Activated CD4-positive, alpha-beta memory T cell treated with anti-CD3 and anti-CD28 coated beads, Interleukin-2, amount 10 ng/mL, durations not matched to agents 7 days and 5 days (primary cell): ENCODE measurements at regions of chr1 and their contacts with region 1.

Region 1: GRCh38 chr1:26391450-26391849 is 18.9 kb upstream of the ZNF683 start:
- DNase-seq: peak; percentile 74
- H3K4me3 Mint-ChIP-seq: no peak overlapping the region
- H3K27ac Mint-ChIP-seq: no peak overlapping the region
- H3K4me1 Mint-ChIP-seq: peaks cover 43% of the 10 kb centered on the region
- H3K27me3 Mint-ChIP-seq: peaks cover 7% of the 10 kb centered on the region

Region 2: GRCh38 chr1:26306290-26307229 is 84.9 kb before region 1 on chr1 and contains the start of gene UBXN11:
- CTCF ChIA-PET with region 1: interaction called, 14 read pairs
- POLR2A ChIA-PET with region 1: no interaction called
- DNase-seq: peak; percentile 96
- H3K4me3 Mint-ChIP-seq: peak within 1 kb of the TSS; percentile 90
- H3K27ac Mint-ChIP-seq: peak within 1 kb of the TSS; percentile 98
- H3K4me1 Mint-ChIP-seq: peaks cover 43% of the 10 kb centered on the region
- H3K27me3 Mint-ChIP-seq: no peaks in the 10 kb centered on the region
- total RNA-seq, gene UBXN11: 46.9 to 49.9 TPM

Region 3: DNA sequence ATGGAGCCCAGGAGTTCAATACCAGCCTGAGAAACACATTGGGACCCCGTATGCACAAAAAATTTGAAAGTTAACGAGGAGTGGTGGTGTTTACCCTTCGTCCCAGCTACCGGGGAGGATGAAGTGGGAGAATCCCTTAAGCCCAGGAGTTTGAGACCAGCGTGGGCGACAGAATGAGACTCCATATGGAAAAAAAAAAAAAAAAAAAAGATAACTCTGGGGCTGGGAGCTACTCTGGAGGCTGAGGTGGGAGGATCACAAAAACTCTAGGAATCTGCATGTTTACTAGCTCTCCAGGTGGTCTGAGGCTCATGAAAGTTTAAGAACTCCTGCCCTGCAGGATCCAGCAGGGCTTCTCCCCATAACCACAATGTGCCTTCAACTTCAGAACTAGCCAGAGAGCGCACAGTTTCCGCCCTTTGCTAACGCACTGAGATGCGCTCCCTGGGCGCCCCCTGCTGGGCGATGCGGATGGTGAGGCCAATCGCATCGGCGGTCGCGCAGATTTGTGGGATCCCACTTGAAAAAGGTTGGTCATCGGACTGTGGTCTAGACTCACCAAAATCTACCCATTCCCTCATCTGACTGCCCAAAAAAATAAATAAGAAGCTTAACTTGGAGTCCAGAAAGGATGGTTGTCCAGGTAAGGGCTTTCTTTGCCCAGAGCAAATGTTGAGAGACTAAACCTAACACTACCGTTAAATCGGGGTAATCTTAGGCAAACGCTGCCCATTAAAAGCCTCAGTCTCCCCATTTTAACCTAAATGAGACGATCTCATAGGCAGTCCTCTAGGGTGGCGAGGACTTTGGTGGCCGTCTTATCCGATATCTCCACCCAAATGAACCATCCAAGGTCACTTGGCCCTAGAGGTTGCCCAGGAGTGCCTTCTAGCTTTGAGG is 27.7 kb before region 1 on chr1:
- CTCF ChIA-PET with region 1: interaction called, 30 read pairs
- POLR2A ChIA-PET with region 1: interaction called, 4 read pairs
- DNase-seq: peak; percentile 88
- H3K4me3 Mint-ChIP-seq: no peak overlapping the region
- H3K27ac Mint-ChIP-seq: no peak overlapping the region
- H3K4me1 Mint-ChIP-seq: peaks cover 49% of the 10 kb centered on the region
- H3K27me3 Mint-ChIP-seq: peaks cover 23% of the 10 kb centered on the region

Region 4: GRCh38 chr1:26373281-26373680 is 18.2 kb before region 1 on chr1:
- CTCF ChIA-PET with region 1: interaction called, 24 read pairs
- POLR2A ChIA-PET with region 1: interaction called, 18 read pairs
- DNase-seq: peak; percentile 67
- H3K4me3 Mint-ChIP-seq: no peak overlapping the region
- H3K27ac Mint-ChIP-seq: peak overlapping the region; percentile 84
- H3K4me1 Mint-ChIP-seq: peaks cover 83% of the 10 kb centered on the region
- H3K27me3 Mint-ChIP-seq: no peaks in the 10 kb centered on the region